Caco-2 (cell line): ENCODE measurements at regions of chr5 and their contacts with region 1.

Region 1: DNA sequence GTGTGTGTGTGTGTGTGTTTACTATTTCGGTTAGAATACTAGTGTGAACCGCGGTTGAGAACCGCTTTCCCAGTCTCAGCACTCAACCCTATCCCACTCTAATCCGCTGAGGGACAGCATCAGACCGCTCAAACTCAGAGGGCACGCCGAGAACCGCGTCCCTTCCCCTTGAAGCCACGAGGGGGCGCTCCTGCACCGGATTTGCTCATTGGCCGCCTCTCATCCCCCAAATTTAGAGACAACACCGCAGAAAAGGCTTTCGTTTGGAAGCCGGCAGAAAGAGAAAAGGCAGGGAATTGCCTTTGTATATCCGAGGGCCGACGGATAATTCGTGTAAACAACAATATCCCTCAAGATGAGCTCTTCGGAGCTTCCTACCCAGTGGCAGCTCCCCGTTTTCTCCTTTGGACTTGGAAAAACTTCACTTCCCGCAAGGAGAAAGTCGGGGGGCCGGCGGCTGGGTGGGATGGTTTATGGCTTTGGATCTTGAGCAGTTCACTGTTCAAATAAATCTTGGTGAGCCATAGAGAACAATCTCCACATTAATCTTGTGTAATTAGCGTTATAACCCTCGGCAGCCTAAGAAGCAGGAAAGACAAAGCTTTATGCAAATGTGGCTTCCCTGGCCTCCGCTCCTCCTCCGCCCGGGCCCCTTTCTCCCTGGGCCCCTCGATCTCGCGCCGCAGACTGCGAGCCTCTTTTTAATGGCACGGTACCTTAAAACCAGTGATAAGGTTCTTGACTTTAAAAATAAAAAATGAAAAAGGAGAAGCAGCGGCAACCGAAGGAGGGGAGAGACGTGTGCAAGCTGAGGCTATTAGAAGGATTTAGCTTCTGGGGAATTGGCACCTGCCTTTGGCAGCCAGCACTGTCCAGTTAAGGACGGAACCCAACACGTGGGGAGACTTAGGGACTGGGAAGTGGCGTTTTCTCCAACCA is 296.8 kb downstream of the PARP8 start:
- DNase-seq: peak; percentile 66 to 78
- H3K4me3 ChIP-seq: peak overlapping the region; percentile 16
- H3K4me3 Mint-ChIP-seq: peak overlapping the region; percentile 72
- H3K27ac Mint-ChIP-seq: no peak overlapping the region
- H3K4me1 ChIP-seq: no peaks in the 10 kb centered on the region
- H3K4me1 Mint-ChIP-seq: no peaks in the 10 kb centered on the region
- H3K27me3 ChIP-seq: no peaks in the 10 kb centered on the region
- H3K27me3 Mint-ChIP-seq: peaks cover 6% of the 10 kb centered on the region
- CTCF ChIP-seq: peak; percentile 95 to 98

Region 2: DNA sequence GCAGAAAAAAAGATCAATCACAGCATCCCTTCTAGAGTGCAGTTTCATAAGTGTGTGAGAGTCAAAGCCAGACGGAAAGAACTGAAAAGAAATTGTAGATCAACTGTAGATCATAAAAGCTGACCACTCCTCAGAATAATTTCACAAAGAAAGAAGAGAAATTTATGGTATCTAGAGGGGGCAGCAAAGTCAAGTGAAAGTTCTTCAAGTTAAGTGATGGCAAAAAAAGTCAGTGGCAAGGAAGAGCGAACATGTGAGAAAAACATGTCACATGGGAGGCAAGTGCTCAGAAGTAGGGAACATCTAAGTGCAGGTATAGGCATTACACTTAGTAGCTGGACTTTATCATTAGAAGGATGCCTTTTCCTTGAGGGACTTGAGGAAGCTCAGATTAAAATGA is 175.0 kb after region 1 on chr5:
- CTCF ChIA-PET with region 1: no interaction called
- POLR2A ChIA-PET with region 1: no interaction called
- intact Hi-C with region 1: loop called (anchors 10 kb)
- DNase-seq: no peak
- H3K4me3 ChIP-seq: no peak overlapping the region
- H3K4me3 Mint-ChIP-seq: no peak overlapping the region
- H3K27ac Mint-ChIP-seq: no peak overlapping the region
- H3K4me1 ChIP-seq: no peaks in the 10 kb centered on the region
- H3K4me1 Mint-ChIP-seq: no peaks in the 10 kb centered on the region
- H3K27me3 ChIP-seq: no peaks in the 10 kb centered on the region
- H3K27me3 Mint-ChIP-seq: peaks cover 3% of the 10 kb centered on the region
- CTCF ChIP-seq: no peak

Region 3: DNA sequence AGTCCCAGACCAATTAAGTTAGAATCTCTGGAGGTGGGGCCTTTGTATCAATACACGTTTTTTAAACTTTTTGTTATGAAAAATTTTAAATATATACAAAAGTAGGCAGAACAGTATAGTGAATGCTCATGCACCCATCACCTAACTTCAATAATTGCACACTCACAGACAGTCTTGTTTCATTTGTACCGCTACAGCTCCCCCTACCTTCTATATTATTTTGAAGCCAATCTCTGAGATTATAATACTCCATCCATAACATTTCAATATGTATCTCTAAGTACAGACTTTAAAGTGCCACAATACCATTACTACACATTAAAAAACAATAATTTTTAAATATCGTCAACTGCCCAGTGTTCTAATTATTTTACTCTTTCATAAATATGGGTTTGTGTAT is 452.9 kb after region 1 on chr5:
- CTCF ChIA-PET with region 1: no interaction called
- POLR2A ChIA-PET with region 1: no interaction called
- intact Hi-C with region 1: loop called (anchors 1 kb)
- DNase-seq: no peak
- H3K4me3 ChIP-seq: no peak overlapping the region
- H3K4me3 Mint-ChIP-seq: no peak overlapping the region
- H3K27ac Mint-ChIP-seq: no peak overlapping the region
- H3K4me1 ChIP-seq: no peaks in the 10 kb centered on the region
- H3K4me1 Mint-ChIP-seq: no peaks in the 10 kb centered on the region
- H3K27me3 ChIP-seq: no peaks in the 10 kb centered on the region
- H3K27me3 Mint-ChIP-seq: no peaks in the 10 kb centered on the region
- CTCF ChIP-seq: peak in 1 of 2 experiments; percentile 5

Region 4: DNA sequence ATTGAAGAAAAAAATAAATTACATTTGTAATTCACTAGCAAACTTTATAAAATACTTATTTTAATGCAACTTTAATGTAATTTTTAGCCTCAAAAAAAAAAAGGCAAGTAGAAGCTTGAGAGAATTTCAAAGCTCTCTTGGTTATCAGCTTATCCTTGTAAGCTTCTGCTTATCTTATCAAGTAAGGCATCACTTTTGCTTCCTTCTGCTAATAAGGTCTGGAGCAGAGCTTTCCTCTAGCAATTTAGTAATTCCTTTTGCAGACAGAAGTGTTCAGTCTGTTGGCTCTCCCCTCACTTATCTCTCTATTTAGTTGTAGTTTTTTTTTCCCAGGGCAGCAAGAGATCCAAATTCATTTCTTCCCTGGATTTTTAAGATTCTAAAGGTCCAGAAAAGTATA is 945.0 kb after region 1 on chr5:
- CTCF ChIA-PET with region 1: no interaction called
- POLR2A ChIA-PET with region 1: no interaction called
- intact Hi-C with region 1: no loop called
- DNase-seq: no peak
- H3K4me3 ChIP-seq: no peak overlapping the region
- H3K4me3 Mint-ChIP-seq: no peak overlapping the region
- H3K27ac Mint-ChIP-seq: no peak overlapping the region
- H3K4me1 ChIP-seq: peaks cover 10% of the 10 kb centered on the region; the same call in 1 of the 2 replicates
- H3K4me1 Mint-ChIP-seq: peaks cover 10% of the 10 kb centered on the region
- H3K27me3 ChIP-seq: no peaks in the 10 kb centered on the region
- H3K27me3 Mint-ChIP-seq: peaks cover 4% of the 10 kb centered on the region
- CTCF ChIP-seq: no peak

Region 5: DNA sequence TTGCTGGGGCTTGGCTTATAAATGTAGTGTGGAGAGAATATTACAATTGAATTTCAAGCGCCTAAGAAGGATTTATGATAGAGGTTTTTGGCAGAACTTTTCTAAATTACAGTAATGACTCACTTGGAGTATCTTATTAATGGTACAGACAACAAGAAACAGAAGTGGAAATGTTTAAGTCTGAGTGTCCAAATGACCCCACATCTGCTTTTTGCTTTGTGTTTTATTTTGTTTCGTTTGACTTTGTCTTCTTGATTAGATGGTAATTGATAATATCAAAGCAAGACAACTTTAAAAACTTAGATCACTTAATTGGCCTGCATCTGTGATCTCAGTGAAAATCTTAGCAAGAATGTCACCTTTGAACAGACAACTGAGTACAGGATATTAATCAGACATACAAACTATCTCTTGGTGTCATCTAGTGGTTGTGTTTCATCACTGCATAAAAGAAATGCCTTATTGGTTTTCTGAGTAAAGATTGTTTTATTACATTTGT is 997.5 kb after region 1 on chr5:
- CTCF ChIA-PET with region 1: no interaction called
- POLR2A ChIA-PET with region 1: no interaction called
- intact Hi-C with region 1: loop called (anchors 1 kb)
- DNase-seq: no peak
- H3K4me3 ChIP-seq: no peak overlapping the region
- H3K4me3 Mint-ChIP-seq: no peak overlapping the region
- H3K27ac Mint-ChIP-seq: no peak overlapping the region
- H3K4me1 ChIP-seq: no peaks in the 10 kb centered on the region
- H3K4me1 Mint-ChIP-seq: no peaks in the 10 kb centered on the region
- H3K27me3 ChIP-seq: no peaks in the 10 kb centered on the region
- H3K27me3 Mint-ChIP-seq: no peaks in the 10 kb centered on the region
- CTCF ChIP-seq: peak; percentile 38 to 45

Region 6: GRCh38 chr5:52560366-52560765 is 1597.2 kb after region 1 on chr5:
- CTCF ChIA-PET with region 1: no interaction called
- POLR2A ChIA-PET with region 1: no interaction called
- intact Hi-C with region 1: loop called (anchors 1 kb)
- DNase-seq: no peak
- H3K4me3 ChIP-seq: no peak overlapping the region
- H3K4me3 Mint-ChIP-seq: no peak overlapping the region
- H3K27ac Mint-ChIP-seq: no peak overlapping the region
- H3K4me1 ChIP-seq: no peaks in the 10 kb centered on the region
- H3K4me1 Mint-ChIP-seq: no peaks in the 10 kb centered on the region
- H3K27me3 ChIP-seq: no peaks in the 10 kb centered on the region
- H3K27me3 Mint-ChIP-seq: peaks cover 6% of the 10 kb centered on the region
- CTCF ChIP-seq: no peak